Right ventricle myocardium inferior (tissue), 1 donor: ENCODE measurements at regions of chr2 and their contacts with region 1.

Region 1: GRCh38 chr2:134375935-134376334 is 122.1 kb downstream of the MGAT5 start:
- DNase-seq: no peak
- ATAC-seq: peak; percentile 38

Region 2: GRCh38 chr2:134253804-134254203 is 122.1 kb before region 1 on chr2 and contains the start of gene MGAT5:
- intact Hi-C with region 1: no loop called
- DNase-seq: no peak
- ATAC-seq: peak; percentile 11
- total RNA-seq, gene MGAT5: 92.3 TPM

Region 3: DNA sequence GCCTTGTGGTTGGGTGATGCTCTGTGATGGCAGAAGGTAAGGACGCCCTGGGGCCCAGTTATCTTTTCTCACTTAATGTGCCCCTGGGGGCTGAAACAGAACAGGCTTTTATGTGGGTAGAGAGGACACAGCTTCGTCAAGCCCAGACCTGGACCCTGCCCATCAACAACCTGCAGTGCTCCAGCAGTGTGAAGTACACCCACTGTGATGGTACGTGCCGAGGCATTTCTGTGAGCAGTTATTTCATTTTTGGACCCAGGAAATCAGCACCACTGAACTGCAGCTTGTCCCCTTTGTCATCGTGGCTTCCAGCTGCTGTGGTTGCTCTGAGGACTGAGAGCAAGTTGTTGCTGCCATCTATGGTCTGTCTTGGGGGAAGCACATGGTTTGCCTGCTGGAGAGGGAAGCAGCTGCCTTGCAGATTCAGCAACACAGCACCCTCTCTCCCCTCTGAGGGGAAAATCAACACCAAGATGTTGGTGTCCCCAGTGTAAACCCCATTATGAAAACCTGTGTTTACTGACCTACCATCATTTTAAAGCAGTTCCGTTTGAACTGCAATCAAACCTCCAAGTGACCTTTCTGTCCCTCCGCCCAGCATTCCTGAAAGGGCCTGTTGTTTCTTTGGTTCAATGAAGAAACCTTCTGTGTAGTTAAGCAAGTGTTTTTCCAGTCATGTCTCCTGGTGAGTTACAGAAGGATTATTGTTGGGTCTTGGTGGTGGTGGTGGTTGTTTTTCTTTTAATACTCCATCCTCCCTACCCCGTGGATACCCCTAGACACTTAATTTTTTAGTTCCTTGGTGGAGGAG is 36.1 kb after region 1 on chr2:
- intact Hi-C with region 1: loop called (anchors 5 kb)
- DNase-seq: no peak
- ATAC-seq: peak; percentile 96

Region 4: GRCh38 chr2:134454931-134455330 is 79.0 kb after region 1 on chr2:
- intact Hi-C with region 1: loop called (anchors 5 kb)
- DNase-seq: no peak
- ATAC-seq: no peak

Region 5: DNA sequence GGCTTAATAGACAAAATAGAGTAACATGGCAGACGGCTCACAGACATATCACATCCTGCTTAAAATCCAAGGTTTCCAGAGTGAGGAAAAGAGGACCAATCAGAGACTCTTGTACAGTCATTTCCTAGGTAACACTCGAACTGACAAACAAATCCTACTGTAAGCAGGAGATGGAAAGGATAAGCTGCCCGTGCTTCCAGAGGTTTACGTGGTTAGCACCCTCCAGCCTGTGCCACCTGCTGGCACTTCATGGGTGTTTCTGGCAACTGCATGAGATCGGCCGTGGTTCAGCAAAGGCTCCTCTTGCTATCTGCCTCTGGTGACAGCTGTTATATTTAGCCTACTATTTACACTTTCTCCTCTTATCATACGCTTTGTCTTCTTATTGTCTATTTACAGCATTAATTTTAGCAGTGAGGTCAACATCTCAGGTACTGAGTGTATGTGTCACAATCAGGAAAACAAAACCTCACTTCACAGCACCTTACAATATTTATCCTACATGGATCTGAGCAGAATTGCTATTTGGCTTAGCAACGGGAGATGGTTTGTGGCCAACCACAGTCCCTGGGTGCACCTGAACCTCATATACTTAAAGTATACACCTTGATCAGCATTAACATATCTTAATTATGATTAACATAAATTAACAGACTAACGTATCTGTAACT is 116.0 kb after region 1 on chr2:
- intact Hi-C with region 1: no loop called
- DNase-seq: no peak
- ATAC-seq: peak; percentile 73